SK-N-SH (cell line): ENCODE measurements at regions of chr2 and their contacts with region 1.

Region 1: DNA sequence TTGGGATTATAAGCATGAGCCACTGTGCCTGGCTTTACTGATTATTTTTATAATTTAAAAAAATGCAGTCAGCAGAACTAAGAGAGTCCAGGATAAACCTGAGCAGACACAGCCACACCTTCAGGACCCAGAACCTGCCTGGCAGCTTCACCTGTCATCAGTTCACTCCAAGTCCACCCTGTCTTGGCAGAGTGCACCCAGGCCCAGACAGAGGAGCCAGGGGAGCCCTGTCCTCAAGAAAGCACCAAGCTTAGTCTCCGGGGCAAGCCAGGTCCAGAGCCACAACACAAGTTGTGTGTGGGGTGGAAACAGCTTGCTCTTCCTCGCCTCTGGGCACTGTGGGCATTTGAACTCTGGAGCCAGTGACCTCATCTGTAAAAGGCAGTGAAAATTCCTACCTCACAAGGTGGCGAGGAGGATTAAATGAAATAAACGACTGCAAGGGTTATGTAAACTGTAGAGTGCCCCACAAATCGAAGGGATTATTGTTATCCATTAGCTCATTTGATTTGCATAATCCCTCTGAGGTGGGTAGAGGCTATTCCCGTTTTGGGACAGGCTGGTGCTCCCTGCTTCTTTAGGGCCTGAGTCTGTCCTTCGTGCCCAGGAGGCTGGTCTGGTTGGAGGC is 24.7 kb downstream of the MYCN start:
- DNase-seq: no peak
- H3K4me3 ChIP-seq: no peak overlapping the region
- H3K27ac ChIP-seq: no peak overlapping the region
- H3K4me1 ChIP-seq: no peaks in the 10 kb centered on the region
- H3K27me3 ChIP-seq: no peaks in the 10 kb centered on the region
- CTCF ChIP-seq: no peak
- EP300 ChIP-seq: no peak
- RAD21 ChIP-seq: no peak

Region 2: DNA sequence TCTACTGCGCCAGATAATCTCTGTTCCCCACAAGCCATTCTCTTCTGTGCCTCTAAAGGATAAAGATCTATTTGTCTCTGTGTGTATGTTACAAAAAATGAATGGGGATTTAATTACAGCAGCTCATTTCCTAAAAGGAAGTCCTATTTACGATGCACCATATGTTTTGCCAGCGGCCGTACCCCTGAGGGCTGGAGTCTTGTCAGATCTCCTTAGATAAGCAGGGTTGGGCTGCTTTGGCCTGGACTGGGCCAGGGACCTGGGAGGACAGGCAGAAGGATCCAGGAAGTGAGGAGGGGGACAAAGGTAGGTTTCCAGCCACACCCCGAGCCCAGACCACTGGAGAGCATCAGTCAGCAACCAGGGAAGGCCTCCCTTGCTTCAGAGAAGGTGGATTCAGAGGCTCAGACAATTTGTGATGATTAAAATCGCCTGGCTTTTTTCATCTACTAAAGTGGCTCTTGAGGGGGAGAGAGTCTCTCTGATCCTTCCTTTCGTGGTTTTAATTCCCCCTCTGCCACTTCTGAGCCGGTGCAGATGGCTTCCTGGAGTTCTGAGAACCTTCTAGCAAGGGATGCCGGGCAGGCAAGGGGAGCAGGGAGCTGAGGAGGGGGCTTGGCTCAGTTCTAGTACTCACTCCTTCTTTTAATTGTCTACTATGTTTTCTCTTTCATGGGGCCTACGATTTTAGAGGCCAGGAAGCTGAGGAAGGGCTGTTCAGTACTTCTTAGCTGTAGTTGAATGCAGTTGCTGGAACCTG is 17.4 kb after region 1 on chr2:
- CTCF ChIA-PET with region 1: interaction called, 11 read pairs
- POLR2A ChIA-PET with region 1: no interaction called
- DNase-seq: peak; percentile 77
- H3K4me3 ChIP-seq: no peak overlapping the region
- H3K27ac ChIP-seq: no peak overlapping the region
- H3K4me1 ChIP-seq: peaks cover 0 to 38% of the 10 kb centered on the region in 2 experiments; a peak in 1 of 4 replicates
- H3K27me3 ChIP-seq: no peaks in the 10 kb centered on the region
- CTCF ChIP-seq: no peak
- EP300 ChIP-seq: peak in 1 of 2 experiments; percentile 86; a peak in 2 of 4 replicates
- RAD21 ChIP-seq: no peak